ENCODE measurements at regions of chr15 and their contacts with region 1.

Region 1: DNA sequence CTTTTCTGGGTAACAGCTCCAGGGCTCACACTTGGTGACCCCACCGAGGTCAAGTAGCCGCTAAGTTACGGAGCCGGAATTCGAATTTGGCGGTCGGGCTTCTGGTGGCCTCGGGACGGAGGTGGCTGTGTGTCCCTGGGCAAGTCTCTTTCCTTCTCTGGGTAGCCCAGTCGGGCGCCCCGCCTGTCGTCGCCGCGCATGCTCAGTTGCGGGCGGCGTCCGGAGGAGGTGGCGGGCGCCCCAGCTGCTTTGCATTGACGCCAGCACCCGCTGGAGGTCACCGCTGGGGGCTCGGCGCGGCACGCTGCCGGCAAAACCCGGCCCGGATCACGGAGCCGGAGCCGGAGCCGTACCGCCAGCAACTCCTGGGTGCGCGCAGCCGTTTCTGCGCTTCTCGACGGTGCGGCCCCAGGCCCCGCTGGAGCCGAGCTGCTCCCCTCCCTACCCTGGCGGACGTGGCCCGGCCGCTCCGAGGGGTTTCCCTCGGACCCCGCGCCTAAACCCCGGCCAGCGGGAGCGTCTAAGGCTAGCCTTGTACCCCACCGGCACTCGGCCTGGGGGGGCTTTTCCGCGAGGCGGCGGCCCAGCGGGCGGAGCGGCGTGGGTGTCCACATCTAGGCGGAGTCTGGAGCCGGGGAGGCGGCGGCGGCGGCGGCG is 474 bp upstream of the PDE8A start:
- DNase-seq: peak; percentile 95
- H3K4me3 Mint-ChIP-seq: peak overlapping the region; percentile 92
- H3K27ac Mint-ChIP-seq: peak overlapping the region; percentile 93
- H3K4me1 Mint-ChIP-seq: peaks cover 43% of the 10 kb centered on the region
- H3K27me3 Mint-ChIP-seq: no peaks in the 10 kb centered on the region

Region 2: DNA sequence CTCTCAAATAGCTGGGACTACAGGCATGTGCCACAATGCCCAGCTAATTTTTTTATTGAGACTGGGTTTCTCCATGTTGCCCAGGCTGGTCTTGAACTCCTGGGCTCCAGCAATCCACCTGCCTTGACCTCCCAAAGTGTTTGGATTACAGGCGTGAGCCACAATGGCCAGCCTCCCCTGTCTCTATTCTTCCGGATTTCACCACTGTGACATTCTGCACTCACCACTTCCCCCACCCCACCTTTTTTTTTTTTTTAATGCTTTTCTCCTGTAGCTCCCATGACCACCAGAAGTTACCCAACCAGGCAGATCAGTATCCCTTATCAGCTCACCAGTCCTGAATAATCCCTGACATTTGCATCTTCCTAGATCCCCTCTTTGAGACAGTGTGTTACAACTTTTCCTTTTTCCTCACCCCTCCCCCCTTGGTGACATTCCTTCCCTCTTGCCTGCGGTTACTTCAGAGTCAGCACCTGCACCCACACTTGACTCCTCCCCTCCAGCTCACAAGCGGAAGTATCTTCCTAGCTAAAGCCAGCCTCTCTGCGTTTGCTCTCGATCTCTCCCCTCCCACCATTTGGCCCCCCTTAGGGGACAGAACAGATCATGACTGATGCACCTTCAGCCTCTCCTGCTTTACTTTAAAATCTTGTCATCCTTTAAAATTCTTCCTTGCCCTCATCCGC is 246.2 kb before region 1 on chr15:
- CTCF ChIA-PET with region 1: no interaction called
- intact Hi-C with region 1: loop called (anchors 5 kb)
- DNase-seq: peak; percentile 90
- H3K4me3 Mint-ChIP-seq: peak overlapping the region; percentile 73
- H3K27ac Mint-ChIP-seq: peak overlapping the region; percentile 95
- H3K4me1 Mint-ChIP-seq: peaks cover 49% of the 10 kb centered on the region
- H3K27me3 Mint-ChIP-seq: no peaks in the 10 kb centered on the region

Region 3: GRCh38 chr15:84911879-84912660 is 69.1 kb before region 1 on chr15:
- CTCF ChIA-PET with region 1: no interaction called
- intact Hi-C with region 1: no loop called
- DNase-seq: no peak
- H3K4me3 Mint-ChIP-seq: no peak overlapping the region
- H3K27ac Mint-ChIP-seq: no peak overlapping the region
- H3K4me1 Mint-ChIP-seq: peaks cover 6% of the 10 kb centered on the region
- H3K27me3 Mint-ChIP-seq: peaks cover 2% of the 10 kb centered on the region

Region 4: GRCh38 chr15:85030301-85031049 is 49.3 kb after region 1 on chr15:
- CTCF ChIA-PET with region 1: no interaction called
- intact Hi-C with region 1: loop called (anchors 1 kb)
- DNase-seq: peak; percentile 31
- H3K4me3 Mint-ChIP-seq: no peak overlapping the region
- H3K27ac Mint-ChIP-seq: no peak overlapping the region
- H3K4me1 Mint-ChIP-seq: peaks cover 51% of the 10 kb centered on the region
- H3K27me3 Mint-ChIP-seq: no peaks in the 10 kb centered on the region

Region 5: DNA sequence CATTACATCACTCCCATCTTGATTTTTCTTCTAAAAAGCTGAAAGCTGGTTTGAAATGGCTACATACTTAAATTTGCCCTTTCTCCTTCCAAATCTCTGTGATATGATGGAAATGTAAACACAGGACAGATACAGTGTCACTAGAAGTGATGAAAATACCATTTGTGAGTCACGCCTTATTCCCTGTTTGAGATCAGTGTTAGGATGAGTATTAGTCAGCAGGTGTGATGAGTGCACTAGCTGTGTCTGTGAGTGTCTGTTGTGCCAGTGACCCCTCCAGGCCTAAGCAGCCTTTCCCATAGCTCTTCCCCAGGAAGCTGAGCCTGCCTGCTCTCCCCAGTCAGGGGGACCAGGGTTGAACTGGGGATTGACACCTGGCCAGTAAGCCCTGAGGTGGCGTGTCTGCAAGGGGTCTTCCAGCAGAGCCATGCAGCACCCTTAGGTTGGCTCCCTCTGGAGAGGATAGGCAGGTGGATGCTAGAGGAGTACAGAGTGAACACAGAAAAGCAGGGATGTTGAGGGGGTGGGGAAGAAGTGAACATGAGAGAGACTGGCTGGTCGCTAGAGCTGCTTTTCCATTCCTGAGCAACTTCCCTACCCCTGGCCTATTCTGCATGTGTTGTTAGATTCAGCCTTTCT is 92.5 kb after region 1 on chr15:
- CTCF ChIA-PET with region 1: interaction called, 3 read pairs
- intact Hi-C with region 1: loop called (anchors 1 kb)
- DNase-seq: peak; percentile 64
- H3K4me3 Mint-ChIP-seq: no peak overlapping the region
- H3K27ac Mint-ChIP-seq: peak overlapping the region; percentile 74
- H3K4me1 Mint-ChIP-seq: peaks cover 22% of the 10 kb centered on the region
- H3K27me3 Mint-ChIP-seq: no peaks in the 10 kb centered on the region

Region 6: DNA sequence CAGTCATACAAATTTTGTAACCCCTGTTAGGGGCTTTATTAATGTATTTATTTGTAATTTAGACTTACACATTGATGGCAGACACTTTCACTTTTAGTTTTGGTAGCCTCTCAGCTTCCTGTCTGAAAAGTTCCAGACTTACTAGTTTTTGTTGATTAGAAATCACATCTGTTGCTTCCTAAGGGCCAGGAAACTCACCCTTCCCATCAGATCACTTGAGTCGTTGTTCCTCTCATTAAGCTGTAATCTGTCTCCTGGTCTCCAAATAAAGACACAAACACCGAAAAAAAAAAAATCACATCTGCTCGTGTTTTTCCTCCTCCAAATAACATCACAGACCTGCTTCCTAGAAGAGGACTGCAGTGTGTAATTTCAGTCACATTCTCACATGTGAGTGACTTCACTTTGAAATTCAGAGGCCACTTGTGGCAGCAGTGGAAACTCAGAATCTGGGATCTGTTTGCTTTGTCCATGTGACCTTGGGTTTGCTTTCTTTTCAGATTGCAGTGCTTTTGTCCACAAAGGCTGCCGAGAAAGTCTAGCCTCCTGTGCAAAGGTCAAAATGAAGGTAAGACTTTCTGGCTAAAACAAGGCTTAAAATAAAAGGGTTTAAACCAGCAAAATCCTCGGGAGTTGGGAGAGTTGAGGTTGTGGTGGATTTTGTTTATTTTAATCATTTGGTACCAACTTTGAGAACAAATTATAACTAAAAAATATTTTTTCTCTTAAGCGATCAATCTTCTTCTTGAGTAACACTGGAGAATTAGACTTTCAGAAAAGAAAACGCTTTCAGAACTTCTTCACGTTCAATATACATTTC is 726.5 kb after region 1 on chr15:
- CTCF ChIA-PET with region 1: interaction called, 5 read pairs
- intact Hi-C with region 1: loop called (anchors 10 kb)
- DNase-seq: peak; percentile 51
- H3K4me3 Mint-ChIP-seq: peak overlapping the region; percentile 79
- H3K27ac Mint-ChIP-seq: peak overlapping the region; percentile 99
- H3K4me1 Mint-ChIP-seq: peaks cover 87% of the 10 kb centered on the region
- H3K27me3 Mint-ChIP-seq: no peaks in the 10 kb centered on the region

Measured in activated naive CD4-positive, alpha-beta T cell treated with anti-CD3 and anti-CD28 coated beads for 36 hours (primary cell).